ENCODE measurements at regions of chr7 and their contacts with region 1.

Region 1: DNA sequence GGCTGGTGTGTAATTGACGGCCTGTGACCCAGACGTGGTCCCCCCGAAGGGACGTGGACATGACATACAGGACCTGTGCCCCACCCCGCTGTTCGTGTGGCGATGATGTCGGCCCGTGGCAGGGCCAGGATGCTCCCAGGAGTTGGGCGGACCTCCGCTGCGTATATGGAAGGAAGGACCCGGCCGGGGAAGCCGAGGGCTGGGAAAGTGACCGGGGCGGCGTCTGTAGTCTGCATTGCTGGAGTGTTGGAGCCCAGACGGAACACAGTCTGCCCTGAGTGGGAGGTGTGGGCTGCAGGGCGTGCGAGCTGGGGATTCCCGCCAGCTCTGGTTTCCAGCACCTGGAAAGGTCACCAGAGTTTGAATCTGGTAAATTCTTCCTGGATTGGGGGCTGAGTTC is 45.0 kb upstream of the FOXL3 start:
- DNase-seq: peak in 1 of 3 donors; percentile 42
- ATAC-seq: no peak
- H3K4me3 ChIP-seq: no peak overlapping the region
- H3K27ac ChIP-seq: no peak overlapping the region
- H3K4me1 ChIP-seq: peaks cover 3% of the 10 kb centered on the region
- H3K27me3 ChIP-seq: no peaks in the 10 kb centered on the region

Region 2: DNA sequence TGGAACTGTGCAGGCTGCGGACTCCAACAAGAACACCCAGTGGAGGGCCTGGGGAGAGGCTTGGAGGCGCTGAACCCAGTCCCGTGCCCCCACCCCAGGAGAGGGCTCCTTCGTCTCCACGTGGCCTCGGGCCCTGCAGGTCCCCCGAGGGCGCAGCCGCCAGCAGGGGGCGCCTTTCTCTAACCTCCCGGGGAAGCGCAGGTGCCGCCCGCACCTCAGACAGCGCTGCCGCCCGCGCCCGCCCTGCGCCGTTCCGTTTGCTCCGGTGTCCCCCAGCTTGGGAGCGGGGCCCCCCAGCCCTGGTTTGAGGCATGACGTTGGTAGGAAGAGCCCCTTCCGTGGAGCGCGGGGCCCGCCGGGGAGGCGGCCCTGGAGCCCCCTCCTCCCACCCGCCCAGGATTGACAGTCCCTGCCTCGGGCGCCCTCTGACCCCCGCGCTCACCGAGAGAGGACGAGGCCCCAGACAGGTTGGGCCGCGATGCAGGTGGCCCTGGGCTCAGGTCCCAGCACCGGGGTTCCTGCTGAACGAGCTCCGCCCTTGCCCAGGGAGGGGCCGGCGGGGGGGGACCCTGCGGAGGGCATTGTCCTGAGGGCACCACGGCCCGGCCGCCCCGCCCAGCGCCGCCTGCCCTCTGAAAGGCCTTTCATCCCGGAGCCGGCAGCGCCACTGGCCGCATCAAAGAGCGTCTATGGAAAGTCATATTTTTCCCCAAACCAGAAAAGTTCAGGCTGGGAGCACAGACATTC is 87.8 kb after region 1 on chr7:
- intact Hi-C with region 1: no loop called
- DNase-seq: peak; percentile 80 to 94 (median 93)
- ATAC-seq: peak; percentile 92 to 93
- H3K4me3 ChIP-seq: peak overlapping the region; percentile 45
- H3K27ac ChIP-seq: peak overlapping the region; percentile 65
- H3K4me1 ChIP-seq: no peaks in the 10 kb centered on the region
- H3K27me3 ChIP-seq: no peaks in the 10 kb centered on the region

Region 3: GRCh38 chr7:552868-553635 is 308.1 kb after region 1 on chr7:
- intact Hi-C with region 1: loop called in 1 of 4 experiments (anchors 5 kb)
- DNase-seq: peak in 2 of 3 donors; percentile 47 to 60
- ATAC-seq: peak in 1 of 2 donors; percentile 14
- H3K4me3 ChIP-seq: no peak overlapping the region
- H3K27ac ChIP-seq: no peak overlapping the region
- H3K4me1 ChIP-seq: no peaks in the 10 kb centered on the region
- H3K27me3 ChIP-seq: no peaks in the 10 kb centered on the region